ENCODE measurements at regions of chr2 and their contacts with region 1.

Region 1: GRCh38 chr2:43131024-43131889 is 95.1 kb downstream of the ZFP36L2 start:
- DNase-seq: peak; percentile 73
- ATAC-seq: peak; percentile 35 to 71

Region 2: GRCh38 chr2:42844901-42845821 is 286.1 kb before region 1 on chr2:
- intact Hi-C with region 1: loop called in 1 of 2 experiments (anchors 10 kb)
- DNase-seq: no peak
- ATAC-seq: peak; percentile 36 to 58

Region 3: GRCh38 chr2:42974721-42975717 is 156.2 kb before region 1 on chr2:
- intact Hi-C with region 1: loop called in 1 of 2 experiments (anchors 5 kb)
- DNase-seq: peak; percentile 80
- ATAC-seq: peak; percentile 91 to 92

Region 4: DNA sequence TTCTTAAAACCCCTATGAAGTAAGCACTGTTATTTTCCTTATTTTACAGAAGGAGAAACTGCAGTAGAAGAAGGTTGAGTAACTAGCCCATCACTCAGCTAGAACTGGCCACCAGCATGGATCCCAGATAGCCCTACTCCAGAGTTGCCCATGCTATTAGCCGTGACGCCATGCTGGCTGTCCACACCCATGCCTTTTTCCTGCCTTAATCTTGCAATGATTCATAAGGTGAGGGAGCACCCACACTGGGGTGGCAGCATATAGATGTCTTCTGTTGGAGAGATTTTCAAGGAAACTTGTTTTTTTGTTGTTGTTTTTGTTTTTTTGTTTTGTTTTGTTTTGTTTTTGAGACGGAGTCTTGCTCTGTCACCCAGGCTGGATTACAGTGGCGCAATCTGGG is 134.7 kb before region 1 on chr2:
- intact Hi-C with region 1: no loop called
- DNase-seq: no peak
- ATAC-seq: no peak

Region 5: GRCh38 chr2:43251171-43251731 is 120.0 kb after region 1 on chr2:
- intact Hi-C with region 1: no loop called
- DNase-seq: no peak
- ATAC-seq: peak; percentile 74 to 84